ENCODE measurements at regions of chr10 and their contacts with region 1.

Region 1: DNA sequence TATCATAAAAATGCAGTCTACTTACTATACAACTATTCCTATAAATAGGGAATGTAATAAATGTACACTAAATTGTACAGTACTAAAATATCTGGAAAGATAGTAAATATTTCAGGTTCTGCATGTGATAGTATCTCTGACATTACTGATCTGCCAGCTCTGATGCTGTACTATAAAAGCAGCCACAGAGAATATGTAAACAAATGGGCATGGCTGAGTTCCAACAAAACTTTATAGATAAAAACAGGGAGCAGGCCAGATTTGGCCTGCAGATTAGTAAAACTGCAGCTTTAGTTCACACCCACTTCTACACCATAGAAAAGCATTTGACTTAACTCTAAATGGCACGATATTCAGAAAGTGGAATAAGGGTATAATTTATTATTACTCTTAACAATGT is 18.8 kb upstream of the TLL2 start:
- DNase-seq: no peak
- H3K4me3 ChIP-seq: no peak overlapping the region
- H3K27ac ChIP-seq: no peak overlapping the region
- H3K4me1 ChIP-seq: peaks cover 0 to 33% (median 17%) of the 10 kb centered on the region in 4 donors
- H3K27me3 ChIP-seq: no peaks in the 10 kb centered on the region
- CTCF ChIP-seq: no peak
- EP300 ChIP-seq: no peak
- POLR2A ChIP-seq: no peak

Region 2: DNA sequence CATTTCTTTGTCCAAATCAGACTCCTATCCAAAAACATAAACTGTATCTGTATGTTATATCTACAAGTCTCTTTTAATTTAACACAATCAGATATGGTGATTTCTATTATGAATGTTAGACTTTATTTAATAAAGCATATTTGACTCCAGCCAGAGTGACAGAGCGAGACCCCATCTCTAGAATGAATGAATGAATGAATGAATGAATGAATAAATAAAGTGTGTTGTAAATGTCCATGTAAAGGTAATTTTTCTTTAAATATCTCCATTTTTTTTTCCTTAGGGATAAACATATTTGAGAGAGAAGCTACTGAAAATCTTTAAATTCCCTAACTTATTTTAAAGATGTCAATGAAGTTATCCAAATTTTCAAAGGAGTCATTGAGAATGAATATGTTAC is 857.9 kb before region 1 on chr10:
- in situ Hi-C with region 1: no loop called
- intact Hi-C with region 1: loop called (anchors 5 kb)
- DNase-seq: no peak
- H3K4me3 ChIP-seq: no peak overlapping the region
- H3K27ac ChIP-seq: no peak overlapping the region
- H3K4me1 ChIP-seq: no peaks in the 10 kb centered on the region
- H3K27me3 ChIP-seq: no peaks in the 10 kb centered on the region
- CTCF ChIP-seq: no peak
- EP300 ChIP-seq: no peak
- POLR2A ChIP-seq: no peak

Region 3: GRCh38 chr10:96271016-96271829 is 261.3 kb before region 1 on chr10 and contains the start of gene BLNK:
- in situ Hi-C with region 1: no loop called
- intact Hi-C with region 1: no loop called
- DNase-seq: peak; percentile 86
- H3K4me3 ChIP-seq: peak within 1 kb of the TSS in 3 of 4 donors; percentile 13 to 45 (median 35)
- H3K27ac ChIP-seq: peak within 1 kb of the TSS; percentile 86 to 88 (median 86)
- H3K4me1 ChIP-seq: peaks cover 9 to 79% (median 44%) of the 10 kb centered on the region in 4 donors
- H3K27me3 ChIP-seq: no peaks in the 10 kb centered on the region
- CTCF ChIP-seq: no peak
- EP300 ChIP-seq: no peak
- POLR2A ChIP-seq: peak; percentile 83
- total RNA-seq, gene BLNK: 5.6 to 21.8 (median 12.0) TPM

Region 4: GRCh38 chr10:96377816-96378294 is 154.6 kb before region 1 on chr10:
- in situ Hi-C with region 1: no loop called
- intact Hi-C with region 1: no loop called
- DNase-seq: peak; percentile 64
- H3K4me3 ChIP-seq: no peak overlapping the region
- H3K27ac ChIP-seq: peak overlapping the region in 2 of 4 donors; percentile 6 to 45
- H3K4me1 ChIP-seq: peaks cover 4 to 29% (median 14%) of the 10 kb centered on the region in 4 donors
- H3K27me3 ChIP-seq: no peaks in the 10 kb centered on the region
- CTCF ChIP-seq: no peak
- EP300 ChIP-seq: peak; percentile 25
- POLR2A ChIP-seq: no peak